ENCODE measurements at regions of chr6 and their contacts with region 1.

Region 1: DNA sequence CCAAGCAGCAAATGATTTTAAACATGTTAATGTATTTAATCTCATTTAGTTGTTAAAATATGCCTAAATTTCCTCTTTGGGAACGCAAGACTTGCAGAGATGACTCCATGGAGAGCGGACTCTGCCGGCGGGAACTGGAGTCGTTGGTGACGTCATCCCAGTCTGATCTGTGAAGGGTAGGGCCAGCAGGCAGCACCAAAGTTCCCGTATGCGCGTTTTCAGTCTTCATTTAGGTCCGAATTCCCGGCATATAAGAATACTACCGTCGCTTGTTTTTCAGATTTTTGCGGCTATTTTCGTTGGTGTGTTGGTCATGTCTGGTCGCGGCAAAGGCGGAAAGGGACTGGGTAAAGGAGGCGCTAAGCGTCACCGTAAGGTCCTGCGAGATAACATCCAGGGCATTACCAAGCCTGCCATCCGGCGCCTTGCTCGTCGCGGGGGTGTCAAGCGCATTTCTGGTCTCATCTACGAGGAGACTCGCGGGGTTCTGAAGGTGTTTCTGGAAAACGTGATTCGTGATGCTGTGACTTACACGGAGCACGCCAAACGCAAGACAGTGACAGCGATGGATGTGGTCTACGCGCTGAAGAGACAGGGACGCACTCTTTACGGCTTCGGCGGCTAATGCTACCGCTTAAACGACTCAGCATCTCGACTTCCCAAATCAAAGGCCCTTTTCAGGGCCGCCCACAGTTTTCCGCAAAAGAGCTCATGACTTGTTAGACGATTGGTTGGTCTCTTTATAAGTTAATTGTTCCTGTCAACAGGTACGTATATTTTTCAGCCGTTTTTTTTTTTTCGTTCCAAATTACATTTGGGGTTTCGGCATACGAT is 117.3 kb downstream of the HFE start:
- DNase-seq: peak; percentile 99
- H3K4me3 ChIP-seq: peak overlapping the region; percentile 69
- H3K27ac ChIP-seq: peak overlapping the region; percentile 89
- H3K4me1 ChIP-seq: peaks cover 13% of the 10 kb centered on the region
- H3K27me3 ChIP-seq: no peaks in the 10 kb centered on the region
- CTCF ChIP-seq: peak; percentile 51

Region 2: GRCh38 chr6:26025894-26026832 is 178.4 kb before region 1 on chr6:
- CTCF ChIA-PET with region 1: no interaction called
- POLR2A ChIA-PET with region 1: interaction called, 9 read pairs
- intact Hi-C with region 1: loop called (anchors 10 kb)
- DNase-seq: peak; percentile 97
- H3K4me3 ChIP-seq: peak overlapping the region; percentile 52
- H3K27ac ChIP-seq: peak overlapping the region; percentile 82
- H3K4me1 ChIP-seq: peaks cover 28% of the 10 kb centered on the region
- H3K27me3 ChIP-seq: no peaks in the 10 kb centered on the region
- CTCF ChIP-seq: peak; percentile 86

Region 3: GRCh38 chr6:26234421-26235296 is 30.1 kb after region 1 on chr6:
- CTCF ChIA-PET with region 1: no interaction called
- POLR2A ChIA-PET with region 1: interaction called, 12 read pairs
- intact Hi-C with region 1: no loop called
- DNase-seq: peak; percentile 93
- H3K4me3 ChIP-seq: peak overlapping the region; percentile 54
- H3K27ac ChIP-seq: peak overlapping the region; percentile 90
- H3K4me1 ChIP-seq: peaks cover 24% of the 10 kb centered on the region
- H3K27me3 ChIP-seq: no peaks in the 10 kb centered on the region
- CTCF ChIP-seq: no peak